IMR-90 (cell line): ENCODE measurements at regions of chr15 and their contacts with region 1.

Region 1: GRCh38 chr15:92917606-92918407 is 17.7 kb downstream of the CHD2 start:
- DNase-seq: peak; percentile 93
- ATAC-seq: peak; percentile 61
- H3K4me3 ChIP-seq: no peak overlapping the region
- H3K27ac ChIP-seq: peak overlapping the region; percentile 88; the same call in 1 of the 2 replicates
- H3K4me1 ChIP-seq: peaks cover 31% of the 10 kb centered on the region
- H3K27me3 ChIP-seq: no peaks in the 10 kb centered on the region
- CTCF ChIP-seq: peak; percentile 94
- POLR2A ChIP-seq: peak; percentile 33; the same call in 1 of the 2 replicates
- RAD21 ChIP-seq: peak; percentile 85

Region 2: GRCh38 chr15:92429378-92430068 is 488.3 kb before region 1 on chr15:
- CTCF ChIA-PET with region 1: interaction called, 10 read pairs
- POLR2A ChIA-PET with region 1: no interaction called
- dilution Hi-C with region 1: no loop called
- in situ Hi-C with region 1: no loop called
- intact Hi-C with region 1: no loop called
- DNase-seq: peak; percentile 61
- ATAC-seq: no peak
- H3K4me3 ChIP-seq: no peak overlapping the region
- H3K27ac ChIP-seq: no peak overlapping the region
- H3K4me1 ChIP-seq: no peaks in the 10 kb centered on the region
- H3K27me3 ChIP-seq: no peaks in the 10 kb centered on the region
- CTCF ChIP-seq: no peak
- POLR2A ChIP-seq: no peak
- RAD21 ChIP-seq: no peak

Region 3: DNA sequence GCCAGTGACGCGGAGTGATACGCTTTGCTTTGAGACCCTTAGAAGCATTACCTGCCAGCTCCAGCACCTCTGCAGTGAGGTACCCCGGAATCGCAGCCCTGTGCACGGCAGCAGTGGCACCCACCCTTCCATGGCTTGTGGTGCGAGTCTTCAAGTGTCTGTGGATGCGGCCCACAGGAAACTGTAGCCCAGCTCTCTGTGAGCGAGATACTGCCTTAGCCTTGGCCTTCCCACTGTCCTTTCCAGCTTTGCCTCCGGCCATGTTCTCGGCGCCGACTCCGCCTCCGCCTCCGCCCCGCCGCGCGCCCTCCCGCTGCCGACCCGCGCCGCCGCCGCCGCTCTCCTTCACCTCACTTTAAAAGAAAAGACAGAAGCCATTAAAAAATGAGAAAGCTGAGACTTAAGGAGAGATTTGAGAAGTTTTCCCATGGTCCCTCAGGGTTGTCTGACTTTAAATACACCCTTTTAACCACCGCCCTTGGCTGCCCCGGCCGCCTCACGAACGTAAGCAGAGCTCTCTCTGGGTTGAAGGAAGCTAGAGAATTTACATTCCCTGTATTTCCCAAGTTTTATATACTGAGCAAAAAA is 183.8 kb before region 1 on chr15:
- CTCF ChIA-PET with region 1: no interaction called
- POLR2A ChIA-PET with region 1: no interaction called
- dilution Hi-C with region 1: no loop called
- in situ Hi-C with region 1: no loop called
- intact Hi-C with region 1: loop called (anchors 10 kb)
- DNase-seq: peak; percentile 11
- ATAC-seq: peak; percentile 89
- H3K4me3 ChIP-seq: peak overlapping the region; percentile 45
- H3K27ac ChIP-seq: 0 out of 2 replicates have a peak overlapping the region, but pooled peaks have one; percentile 55
- H3K4me1 ChIP-seq: peaks cover 2% of the 10 kb centered on the region; the same call in 1 of the 2 replicates
- H3K27me3 ChIP-seq: no peaks in the 10 kb centered on the region
- CTCF ChIP-seq: no peak
- POLR2A ChIP-seq: no peak
- RAD21 ChIP-seq: no peak